CD4-positive, alpha-beta memory T cell (primary cell): ENCODE measurements at regions of chr17 and their contacts with region 1.

Region 1: GRCh38 chr17:32486111-32486700 is 587 bp upstream of the CDK5R1 start:
- DNase-seq: peak; percentile 70 to 76 (median 74)
- H3K4me3 ChIP-seq: no peak overlapping the region
- H3K4me3 Mint-ChIP-seq: peak overlapping the region; percentile 65 to 85 (median 80)
- H3K27ac ChIP-seq: no peak overlapping the region
- H3K27ac Mint-ChIP-seq: peak overlapping the region in 6 of 7 donors; percentile 48 to 93 (median 88)
- H3K4me1 ChIP-seq: peaks cover 42% of the 10 kb centered on the region
- H3K4me1 Mint-ChIP-seq: peaks cover 15 to 50% (median 31%) of the 10 kb centered on the region in 4 donors
- H3K27me3 ChIP-seq: no peaks in the 10 kb centered on the region
- H3K27me3 Mint-ChIP-seq: no peaks in the 10 kb centered on the region

Region 2: DNA sequence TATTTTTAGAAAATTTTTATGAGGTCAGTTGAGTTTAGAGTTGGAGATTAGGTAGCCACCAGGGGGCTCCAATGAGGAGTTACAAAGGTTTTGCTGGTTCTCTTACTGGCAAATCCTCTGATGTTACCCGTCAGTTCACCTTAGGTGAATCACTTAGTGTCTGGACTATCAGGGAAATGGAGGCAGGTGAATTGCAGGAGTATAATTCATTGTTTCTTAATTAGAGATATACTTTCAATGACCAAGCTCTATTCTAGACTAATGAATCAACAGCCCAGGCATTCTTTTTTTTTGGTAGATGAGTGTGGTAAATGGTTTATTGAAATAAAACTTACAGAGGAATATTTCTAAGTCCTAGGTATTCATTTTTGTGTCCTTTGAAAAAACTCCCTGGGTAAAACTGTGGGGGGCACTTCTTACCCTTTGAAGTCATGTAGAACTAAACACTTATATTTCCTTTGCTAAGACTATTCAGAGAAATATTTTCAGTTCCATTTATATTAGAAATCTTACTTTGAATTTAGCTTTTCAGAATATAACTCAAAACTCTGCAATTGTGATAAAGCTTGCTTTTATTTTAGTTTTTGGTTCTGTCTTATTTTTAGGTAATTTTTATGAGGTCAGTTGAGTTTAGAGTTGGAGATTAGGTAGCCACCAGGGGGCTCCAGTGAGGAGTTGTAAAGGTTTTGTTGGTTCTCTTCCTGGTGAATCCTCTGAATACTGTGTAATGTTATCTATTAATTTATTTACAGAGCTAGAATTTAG is 24.2 kb before region 1 on chr17:
- CTCF ChIA-PET with region 1: interaction called, 105 read pairs
- POLR2A ChIA-PET with region 1: interaction called, 3 read pairs
- intact Hi-C with region 1: no loop called
- DNase-seq: peak; percentile 62 to 78 (median 65)
- H3K4me3 ChIP-seq: no peak overlapping the region
- H3K4me3 Mint-ChIP-seq: peak overlapping the region in 2 of 8 donors; percentile 20 to 44
- H3K27ac ChIP-seq: no peak overlapping the region
- H3K27ac Mint-ChIP-seq: peak overlapping the region in 6 of 7 donors; percentile 10 to 72 (median 48)
- H3K4me1 ChIP-seq: peaks cover 20% of the 10 kb centered on the region
- H3K4me1 Mint-ChIP-seq: peaks cover 16 to 29% (median 23%) of the 10 kb centered on the region in 4 donors
- H3K27me3 ChIP-seq: no peaks in the 10 kb centered on the region
- H3K27me3 Mint-ChIP-seq: no peaks in the 10 kb centered on the region

Region 3: DNA sequence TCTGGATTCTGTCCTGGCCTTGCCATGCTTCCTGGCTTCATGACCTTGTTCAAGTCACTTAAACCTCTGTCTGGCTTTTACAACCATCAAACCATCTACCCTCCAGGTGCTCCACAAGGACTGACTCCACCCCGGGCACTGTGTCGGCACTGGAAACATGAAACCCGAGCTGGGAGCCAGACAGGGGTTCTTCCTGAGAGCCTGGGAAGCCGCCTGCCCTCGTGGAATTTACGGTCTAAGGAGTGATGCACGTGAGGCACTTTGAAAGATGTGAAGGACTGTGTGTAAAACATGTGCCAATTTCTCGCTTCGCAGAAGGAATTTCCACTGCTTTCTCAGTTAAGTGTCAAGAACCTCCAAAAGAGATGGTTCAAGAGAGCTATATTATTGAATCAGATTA is 12.2 kb after region 1 on chr17:
- CTCF ChIA-PET with region 1: interaction called, 5 read pairs
- POLR2A ChIA-PET with region 1: interaction called, 30 read pairs
- intact Hi-C with region 1: loop called (anchors 1 kb)
- DNase-seq: peak in 1 of 5 donors; percentile 33
- H3K4me3 ChIP-seq: no peak overlapping the region
- H3K4me3 Mint-ChIP-seq: no peak overlapping the region
- H3K27ac ChIP-seq: no peak overlapping the region
- H3K27ac Mint-ChIP-seq: peak overlapping the region in 1 of 7 donors; percentile 51
- H3K4me1 ChIP-seq: peaks cover 40% of the 10 kb centered on the region
- H3K4me1 Mint-ChIP-seq: peaks cover 13 to 37% (median 25%) of the 10 kb centered on the region in 4 donors
- H3K27me3 ChIP-seq: no peaks in the 10 kb centered on the region
- H3K27me3 Mint-ChIP-seq: no peaks in the 10 kb centered on the region

Region 4: GRCh38 chr17:32519228-32520103 is 33.3 kb after region 1 on chr17:
- CTCF ChIA-PET with region 1: interaction called, 50 read pairs
- POLR2A ChIA-PET with region 1: interaction called, 91 read pairs
- intact Hi-C with region 1: loop called (anchors 1 kb)
- DNase-seq: peak; percentile 50 to 85 (median 54)
- H3K4me3 ChIP-seq: peak overlapping the region in 1 of 2 donors; percentile 33
- H3K4me3 Mint-ChIP-seq: peak overlapping the region; percentile 78 to 96 (median 88)
- H3K27ac ChIP-seq: peak overlapping the region; percentile 48
- H3K27ac Mint-ChIP-seq: peak overlapping the region; percentile 90 to 98 (median 95)
- H3K4me1 ChIP-seq: peaks cover 73% of the 10 kb centered on the region
- H3K4me1 Mint-ChIP-seq: peaks cover 54 to 82% (median 67%) of the 10 kb centered on the region in 4 donors
- H3K27me3 ChIP-seq: no peaks in the 10 kb centered on the region
- H3K27me3 Mint-ChIP-seq: no peaks in the 10 kb centered on the region

Region 5: DNA sequence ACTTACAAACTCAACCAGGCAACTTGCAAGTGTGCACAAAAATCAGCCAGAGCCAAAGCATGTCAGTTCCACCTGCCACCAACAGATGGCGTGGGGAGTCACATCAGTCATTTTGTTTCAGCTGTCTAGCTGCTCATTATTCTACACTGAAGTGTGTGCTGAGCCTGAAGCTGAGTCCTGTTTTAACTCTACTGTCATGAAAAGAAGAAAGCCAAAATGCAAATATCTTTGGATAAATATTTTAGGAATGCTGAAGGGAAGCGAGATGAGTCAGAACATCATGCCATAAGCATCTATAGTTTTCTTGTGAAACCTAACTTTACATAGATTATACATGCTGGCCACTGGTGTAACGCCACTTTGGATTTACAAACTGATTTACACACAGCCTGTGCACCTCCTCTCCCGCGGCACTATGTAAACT is 173.2 kb after region 1 on chr17:
- CTCF ChIA-PET with region 1: interaction called, 16 read pairs
- POLR2A ChIA-PET with region 1: no interaction called
- intact Hi-C with region 1: no loop called
- DNase-seq: peak; percentile 38 to 49 (median 46)
- H3K4me3 ChIP-seq: no peak overlapping the region
- H3K4me3 Mint-ChIP-seq: no peak overlapping the region
- H3K27ac ChIP-seq: no peak overlapping the region
- H3K27ac Mint-ChIP-seq: no peak overlapping the region
- H3K4me1 ChIP-seq: no peaks in the 10 kb centered on the region
- H3K4me1 Mint-ChIP-seq: no peaks in the 10 kb centered on the region
- H3K27me3 ChIP-seq: no peaks in the 10 kb centered on the region
- H3K27me3 Mint-ChIP-seq: no peaks in the 10 kb centered on the region

Region 6: GRCh38 chr17:32877164-32877764 is 391.1 kb after region 1 on chr17:
- CTCF ChIA-PET with region 1: interaction called, 3 read pairs
- POLR2A ChIA-PET with region 1: interaction called, 3 read pairs
- intact Hi-C with region 1: loop called (anchors 2 kb)
- DNase-seq: peak; percentile 87 to 97 (median 95)
- H3K4me3 ChIP-seq: peak overlapping the region in 1 of 2 donors; percentile 62
- H3K4me3 Mint-ChIP-seq: peak overlapping the region; percentile 82 to 91 (median 85)
- H3K27ac ChIP-seq: no peak overlapping the region
- H3K27ac Mint-ChIP-seq: peak overlapping the region; percentile 57 to 97 (median 89)
- H3K4me1 ChIP-seq: peaks cover 18% of the 10 kb centered on the region
- H3K4me1 Mint-ChIP-seq: peaks cover 6 to 19% (median 11%) of the 10 kb centered on the region in 4 donors
- H3K27me3 ChIP-seq: no peaks in the 10 kb centered on the region
- H3K27me3 Mint-ChIP-seq: peaks cover 0 to 2% of the 10 kb centered on the region in 2 donors